Calu3 (cell line): ENCODE measurements at regions of chr17 and their contacts with region 1.

Region 1: GRCh38 chr17:7561028-7561575 is 617 bp upstream of the SENP3 start:
- DNase-seq: peak; percentile 90
- H3K4me3 Mint-ChIP-seq: peak overlapping the region; percentile 90
- H3K27ac Mint-ChIP-seq: peak overlapping the region; percentile 64
- H3K4me1 Mint-ChIP-seq: peaks cover 40% of the 10 kb centered on the region
- H3K27me3 Mint-ChIP-seq: no peaks in the 10 kb centered on the region
- CTCF ChIP-seq: peak; percentile 43

Region 2: DNA sequence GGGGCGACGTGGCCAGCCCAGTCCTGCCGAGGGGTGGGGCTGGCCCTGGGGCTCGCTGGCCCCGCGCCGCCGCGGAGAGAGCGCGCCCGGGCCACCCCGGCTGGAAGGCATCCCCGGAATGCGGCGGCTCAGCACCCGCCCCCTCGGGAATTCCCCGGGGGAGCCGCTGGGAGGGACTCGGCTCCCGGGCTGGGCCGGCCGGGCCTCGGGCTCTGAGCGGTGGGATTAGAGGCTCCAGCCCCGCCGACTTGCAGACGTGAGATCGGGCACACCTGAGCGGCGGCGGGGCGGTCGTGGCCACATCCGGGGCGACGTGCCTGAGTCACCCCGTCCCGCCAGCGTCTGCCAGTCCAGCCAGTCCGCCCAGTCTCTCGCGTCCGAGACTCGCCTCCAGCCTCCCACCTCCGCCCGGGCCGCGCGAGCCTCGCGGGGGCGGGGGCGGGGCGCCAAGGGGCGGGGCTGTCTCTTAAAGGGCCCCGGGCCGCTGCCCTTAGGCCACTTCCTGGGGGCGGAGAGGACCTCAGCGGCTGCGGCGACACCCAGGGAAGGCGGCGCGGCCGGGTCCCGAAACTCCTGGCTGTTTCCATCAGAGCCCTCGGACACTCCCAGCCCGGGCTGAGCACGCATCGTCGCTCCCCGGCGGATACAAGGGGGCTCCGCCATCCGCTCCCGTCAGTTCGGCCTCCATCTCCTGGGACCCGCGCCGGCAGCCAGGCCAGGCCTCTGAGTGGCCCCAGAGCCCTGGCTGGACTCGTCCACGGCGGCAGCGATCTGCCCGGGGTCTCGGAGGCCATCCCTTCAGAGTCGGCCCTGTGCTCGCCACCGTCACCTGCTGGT is 209.2 kb before region 1 on chr17 and contains the start of gene KCTD11:
- CTCF ChIA-PET with region 1: no interaction called
- intact Hi-C with region 1: loop called (anchors 5 kb)
- DNase-seq: peak; percentile 94
- H3K4me3 Mint-ChIP-seq: peak within 1 kb of the TSS; percentile 93
- H3K27ac Mint-ChIP-seq: peak within 1 kb of the TSS; percentile 95
- H3K4me1 Mint-ChIP-seq: peaks cover 28% of the 10 kb centered on the region
- H3K27me3 Mint-ChIP-seq: peaks cover 20% of the 10 kb centered on the region
- CTCF ChIP-seq: no peak
- total RNA-seq, gene KCTD11: 8.5 and 9.9 TPM in 2 replicates

Region 3: GRCh38 chr17:7435221-7435675 is 125.9 kb before region 1 on chr17 and contains the start of gene TMEM102:
- CTCF ChIA-PET with region 1: interaction called, 13 read pairs
- intact Hi-C with region 1: loop called (anchors 5 kb)
- DNase-seq: peak; percentile 95
- H3K4me3 Mint-ChIP-seq: peak within 1 kb of the TSS; percentile 75
- H3K27ac Mint-ChIP-seq: peak within 1 kb of the TSS; percentile 69
- H3K4me1 Mint-ChIP-seq: peaks cover 7% of the 10 kb centered on the region
- H3K27me3 Mint-ChIP-seq: peaks cover 24% of the 10 kb centered on the region
- CTCF ChIP-seq: no peak
- total RNA-seq, gene TMEM102: 8.5 TPM in 2 replicates

Region 4: DNA sequence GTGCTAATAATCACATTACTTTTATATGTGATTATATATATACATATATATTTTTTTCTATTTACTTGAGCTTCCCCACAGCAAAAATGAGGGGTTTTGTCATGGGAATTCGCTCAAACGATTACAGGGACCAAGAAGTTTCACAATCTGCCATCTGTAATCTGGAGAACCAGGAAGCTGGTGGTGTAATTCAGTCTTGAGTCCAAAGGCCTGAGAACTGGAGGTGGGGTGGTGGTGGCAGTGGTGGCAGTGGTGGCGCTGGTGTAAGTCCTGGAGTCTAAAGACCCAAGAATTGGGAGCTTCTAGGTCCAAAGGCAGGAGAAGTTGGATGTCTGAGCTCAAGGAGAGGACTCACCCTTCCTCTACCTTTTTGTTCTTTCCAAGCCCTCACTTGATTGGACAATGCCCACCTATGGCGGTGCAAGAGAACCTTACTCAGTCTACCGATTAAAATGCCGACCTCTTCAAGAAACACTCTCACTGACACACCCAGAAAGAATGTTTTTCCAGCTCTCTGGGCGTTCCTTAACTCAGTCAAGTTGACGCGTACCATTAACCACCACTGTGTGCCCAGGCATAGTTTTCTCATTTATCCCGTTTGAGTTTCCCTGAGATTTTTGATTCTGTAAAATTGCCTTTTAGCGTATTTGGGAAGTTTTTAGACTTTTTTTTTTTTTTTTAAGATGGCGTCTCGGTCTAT is 45.0 kb before region 1 on chr17:
- CTCF ChIA-PET with region 1: interaction called, 33 read pairs
- intact Hi-C with region 1: loop called (anchors 1 kb)
- DNase-seq: peak; percentile 19
- H3K4me3 Mint-ChIP-seq: no peak overlapping the region
- H3K27ac Mint-ChIP-seq: no peak overlapping the region
- H3K4me1 Mint-ChIP-seq: no peaks in the 10 kb centered on the region
- H3K27me3 Mint-ChIP-seq: no peaks in the 10 kb centered on the region
- CTCF ChIP-seq: no peak

Region 5: DNA sequence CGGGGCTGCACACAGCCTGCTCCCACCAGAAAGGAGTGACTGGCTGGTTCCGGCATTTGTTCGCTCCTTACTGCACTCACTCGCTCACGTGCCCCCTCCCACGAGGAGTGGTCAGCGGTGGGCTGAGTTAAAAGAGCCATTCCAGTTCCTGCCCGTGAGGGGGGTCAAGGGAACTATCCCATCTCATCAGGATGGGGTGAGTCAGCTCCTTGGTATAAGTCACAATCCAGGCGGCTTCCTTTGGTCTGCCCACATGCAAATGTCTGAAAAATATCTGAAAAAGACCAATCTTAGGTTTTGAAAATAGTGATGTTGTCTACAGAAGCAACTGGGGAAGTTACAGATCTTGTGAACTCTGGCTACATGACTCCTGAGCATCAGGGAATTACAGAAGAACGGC is 22.2 kb before region 1 on chr17:
- CTCF ChIA-PET with region 1: no interaction called
- intact Hi-C with region 1: no loop called
- DNase-seq: no peak
- H3K4me3 Mint-ChIP-seq: no peak overlapping the region
- H3K27ac Mint-ChIP-seq: no peak overlapping the region
- H3K4me1 Mint-ChIP-seq: no peaks in the 10 kb centered on the region
- H3K27me3 Mint-ChIP-seq: peaks cover 7% of the 10 kb centered on the region
- CTCF ChIP-seq: no peak